ENCODE measurements at regions of chr6 and their contacts with region 1.

Region 1: GRCh38 chr6:63571881-63572732 is at the starts of genes LOC128125822 and PTP4A1:
- DNase-seq: peak; percentile 96 to 98
- H3K4me3 ChIP-seq: peak within 1 kb of the TSS; percentile 98
- H3K4me3 Mint-ChIP-seq: peak within 1 kb of the TSS; percentile 88
- H3K27ac Mint-ChIP-seq: peak within 1 kb of the TSS; percentile 94
- H3K4me1 ChIP-seq: peaks cover 29% of the 10 kb centered on the region
- H3K4me1 Mint-ChIP-seq: peaks cover 8% of the 10 kb centered on the region
- H3K27me3 ChIP-seq: no peaks in the 10 kb centered on the region
- H3K27me3 Mint-ChIP-seq: no peaks in the 10 kb centered on the region
- CTCF ChIP-seq: no peak
- total RNA-seq, gene PTP4A1: 122 and 129 TPM in 2 replicates

Region 2: DNA sequence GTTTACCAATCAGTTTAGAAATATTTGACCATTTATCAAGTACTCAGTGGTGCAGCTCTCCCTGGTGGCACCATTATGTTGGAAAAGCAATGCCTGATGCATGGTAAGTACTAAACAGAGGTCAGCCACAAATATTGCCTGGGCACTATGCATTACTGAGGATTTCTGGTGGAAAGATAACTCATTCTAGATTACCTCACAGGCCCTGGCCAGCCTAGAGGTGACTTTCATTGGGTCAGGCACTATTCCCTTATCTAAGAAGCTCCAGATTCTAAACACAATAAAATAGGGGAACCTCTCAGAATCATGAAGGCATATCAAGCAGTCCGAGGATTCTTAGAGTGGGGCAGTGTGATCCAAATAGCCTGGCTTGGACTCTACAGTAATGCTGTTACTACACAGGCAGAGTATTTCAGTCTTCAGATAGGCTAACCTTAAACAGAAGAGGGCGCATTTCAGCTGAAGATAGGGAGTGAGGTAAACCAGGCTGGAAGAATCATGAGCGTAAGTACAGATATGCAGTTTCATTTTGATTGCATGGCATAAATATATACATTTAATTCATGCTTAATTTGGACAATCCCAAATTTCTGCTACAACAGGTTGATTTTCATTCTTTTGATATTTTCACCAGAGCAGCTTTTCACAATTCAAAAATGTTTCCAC is 264.4 kb before region 1 on chr6:
- CTCF ChIA-PET with region 1: no interaction called
- POLR2A ChIA-PET with region 1: no interaction called
- intact Hi-C with region 1: loop called (anchors 5 kb)
- DNase-seq: peak in 1 of 2 experiments; percentile 46
- H3K4me3 ChIP-seq: no peak overlapping the region
- H3K4me3 Mint-ChIP-seq: no peak overlapping the region
- H3K27ac Mint-ChIP-seq: no peak overlapping the region
- H3K4me1 ChIP-seq: peaks cover 23% of the 10 kb centered on the region
- H3K4me1 Mint-ChIP-seq: peaks cover 11% of the 10 kb centered on the region
- H3K27me3 ChIP-seq: no peaks in the 10 kb centered on the region
- H3K27me3 Mint-ChIP-seq: no peaks in the 10 kb centered on the region
- CTCF ChIP-seq: no peak

Region 3: GRCh38 chr6:63391203-63391970 is 180.7 kb before region 1 on chr6:
- CTCF ChIA-PET with region 1: no interaction called
- POLR2A ChIA-PET with region 1: interaction called, 9 read pairs
- intact Hi-C with region 1: loop called (anchors 2 kb)
- DNase-seq: peak; percentile 82 to 83
- H3K4me3 ChIP-seq: no peak overlapping the region
- H3K4me3 Mint-ChIP-seq: peak overlapping the region; percentile 67
- H3K27ac Mint-ChIP-seq: peak overlapping the region; percentile 73
- H3K4me1 ChIP-seq: peaks cover 44% of the 10 kb centered on the region
- H3K4me1 Mint-ChIP-seq: peaks cover 31% of the 10 kb centered on the region
- H3K27me3 ChIP-seq: no peaks in the 10 kb centered on the region
- H3K27me3 Mint-ChIP-seq: no peaks in the 10 kb centered on the region
- CTCF ChIP-seq: no peak

Region 4: GRCh38 chr6:63458480-63459115 is 113.5 kb before region 1 on chr6:
- CTCF ChIA-PET with region 1: no interaction called
- POLR2A ChIA-PET with region 1: interaction called, 3 read pairs
- intact Hi-C with region 1: loop called (anchors 1 kb)
- DNase-seq: peak in 1 of 2 experiments; percentile 70
- H3K4me3 ChIP-seq: no peak overlapping the region
- H3K4me3 Mint-ChIP-seq: peak overlapping the region; percentile 52
- H3K27ac Mint-ChIP-seq: peak overlapping the region; percentile 66
- H3K4me1 ChIP-seq: peaks cover 36% of the 10 kb centered on the region
- H3K4me1 Mint-ChIP-seq: peaks cover 22% of the 10 kb centered on the region
- H3K27me3 ChIP-seq: no peaks in the 10 kb centered on the region
- H3K27me3 Mint-ChIP-seq: no peaks in the 10 kb centered on the region
- CTCF ChIP-seq: no peak

Region 5: GRCh38 chr6:63509652-63510352 is 62.3 kb before region 1 on chr6:
- CTCF ChIA-PET with region 1: no interaction called
- POLR2A ChIA-PET with region 1: interaction called, 3 read pairs
- intact Hi-C with region 1: loop called (anchors 1 kb)
- DNase-seq: peak; percentile 72 to 78
- H3K4me3 ChIP-seq: no peak overlapping the region
- H3K4me3 Mint-ChIP-seq: no peak overlapping the region
- H3K27ac Mint-ChIP-seq: no peak overlapping the region
- H3K4me1 ChIP-seq: peaks cover 33% of the 10 kb centered on the region
- H3K4me1 Mint-ChIP-seq: peaks cover 6% of the 10 kb centered on the region
- H3K27me3 ChIP-seq: no peaks in the 10 kb centered on the region
- H3K27me3 Mint-ChIP-seq: no peaks in the 10 kb centered on the region
- CTCF ChIP-seq: no peak

Region 6: GRCh38 chr6:63553208-63553607 is 18.9 kb before region 1 on chr6:
- CTCF ChIA-PET with region 1: no interaction called
- POLR2A ChIA-PET with region 1: no interaction called
- intact Hi-C with region 1: no loop called
- DNase-seq: no peak
- H3K4me3 ChIP-seq: no peak overlapping the region
- H3K4me3 Mint-ChIP-seq: no peak overlapping the region
- H3K27ac Mint-ChIP-seq: no peak overlapping the region
- H3K4me1 ChIP-seq: peaks cover 9% of the 10 kb centered on the region; the same call in 1 of the 2 replicates
- H3K4me1 Mint-ChIP-seq: peaks cover 11% of the 10 kb centered on the region
- H3K27me3 ChIP-seq: no peaks in the 10 kb centered on the region
- H3K27me3 Mint-ChIP-seq: no peaks in the 10 kb centered on the region
- CTCF ChIP-seq: no peak